Activated CD4-positive, alpha-beta memory T cell treated with anti-CD3 and anti-CD28 coated beads for 36 hours (primary cell): ENCODE measurements at regions of chr10 and their contacts with region 1.

Region 1: GRCh38 chr10:9081253-9081652 is 1026.8 kb downstream of the GATA3 start:
- DNase-seq: no peak
- H3K4me3 Mint-ChIP-seq: no peak overlapping the region
- H3K27ac Mint-ChIP-seq: peak overlapping the region; percentile 10
- H3K4me1 Mint-ChIP-seq: peaks cover 24% of the 10 kb centered on the region
- H3K27me3 Mint-ChIP-seq: peaks cover 8% of the 10 kb centered on the region

Region 2: DNA sequence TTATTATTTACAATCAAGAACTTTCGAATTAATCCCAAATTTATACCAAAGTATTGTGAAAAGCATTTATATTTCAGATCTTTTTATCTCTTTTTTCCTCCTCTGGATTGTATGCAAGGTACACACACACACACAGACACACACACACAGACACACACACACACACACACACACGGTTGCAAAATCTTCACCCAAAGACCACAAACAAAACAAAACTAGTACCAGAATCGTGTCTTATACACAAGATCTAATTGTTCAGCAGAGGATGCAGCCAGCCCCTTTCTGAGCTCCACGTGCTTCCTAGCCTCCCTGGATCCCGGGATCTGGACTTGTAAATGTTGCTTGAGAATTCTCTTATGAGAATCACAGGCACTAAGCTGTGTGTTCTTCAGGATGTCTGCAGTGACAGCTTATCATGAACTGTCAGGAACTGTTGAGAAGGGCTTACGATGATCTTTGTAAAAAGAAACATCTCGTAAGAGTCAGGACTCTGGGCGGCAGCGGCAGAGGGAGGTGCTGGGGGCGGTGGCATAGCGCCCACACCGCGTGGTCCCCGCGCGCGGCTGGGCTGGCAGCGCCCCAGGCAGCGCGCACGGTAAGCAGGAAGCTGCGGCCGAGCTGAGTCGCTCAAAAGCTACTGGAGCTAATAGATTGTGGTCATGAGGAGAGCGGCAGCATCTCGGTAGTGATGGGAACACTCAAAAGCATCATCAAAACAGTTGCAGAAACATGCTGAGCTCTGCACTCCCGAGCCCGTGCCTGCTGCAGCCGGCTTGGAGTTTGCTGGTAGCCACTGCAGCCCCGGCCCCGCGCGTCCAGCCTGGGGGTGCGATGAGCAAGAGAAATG is 749.1 kb before region 1 on chr10:
- CTCF ChIA-PET with region 1: no interaction called
- POLR2A ChIA-PET with region 1: no interaction called
- intact Hi-C with region 1: loop called (anchors 10 kb)
- DNase-seq: peak; percentile 90
- H3K4me3 Mint-ChIP-seq: peak overlapping the region; percentile 72
- H3K27ac Mint-ChIP-seq: peak overlapping the region; percentile 79
- H3K4me1 Mint-ChIP-seq: peaks cover 72% of the 10 kb centered on the region
- H3K27me3 Mint-ChIP-seq: no peaks in the 10 kb centered on the region

Region 3: DNA sequence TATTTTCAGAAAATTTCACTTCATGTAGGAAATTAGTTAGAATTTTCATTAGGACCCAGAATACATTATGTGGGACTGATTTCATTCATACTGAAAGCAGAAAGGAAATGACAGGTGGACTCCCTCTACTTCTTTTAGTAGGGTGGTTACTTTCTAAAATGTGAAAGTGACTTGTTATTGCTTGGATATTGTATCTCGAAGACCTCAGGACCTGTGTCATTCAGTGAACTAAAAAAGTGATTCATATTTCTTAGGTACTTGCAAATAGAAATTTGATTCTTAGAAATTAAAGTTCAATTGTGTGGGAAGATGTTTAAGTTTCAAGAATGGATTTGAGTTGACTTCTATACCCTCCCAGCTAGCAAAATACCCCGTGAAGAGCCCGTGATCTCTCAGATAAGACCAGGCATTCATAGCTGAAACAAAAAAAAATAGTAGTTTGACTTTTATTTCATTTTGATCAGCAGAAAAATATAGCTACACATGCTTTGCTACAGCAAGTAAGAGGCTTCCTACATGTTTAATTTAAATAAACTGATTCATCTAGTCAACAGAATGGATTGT is 10.4 kb after region 1 on chr10:
- CTCF ChIA-PET with region 1: interaction called, 3 read pairs
- POLR2A ChIA-PET with region 1: interaction called, 6 read pairs
- intact Hi-C with region 1: loop called (anchors 1 kb)
- DNase-seq: peak; percentile 48
- H3K4me3 Mint-ChIP-seq: no peak overlapping the region
- H3K27ac Mint-ChIP-seq: peak overlapping the region; percentile 30
- H3K4me1 Mint-ChIP-seq: peaks cover 24% of the 10 kb centered on the region
- H3K27me3 Mint-ChIP-seq: no peaks in the 10 kb centered on the region

Region 4: GRCh38 chr10:9294865-9295264 is 213.6 kb after region 1 on chr10:
- CTCF ChIA-PET with region 1: no interaction called
- POLR2A ChIA-PET with region 1: no interaction called
- intact Hi-C with region 1: loop called (anchors 1 kb)
- DNase-seq: no peak
- H3K4me3 Mint-ChIP-seq: no peak overlapping the region
- H3K27ac Mint-ChIP-seq: peak overlapping the region; percentile 73
- H3K4me1 Mint-ChIP-seq: peaks cover 21% of the 10 kb centered on the region
- H3K27me3 Mint-ChIP-seq: peaks cover 9% of the 10 kb centered on the region